GM12878 (cell line): ENCODE measurements at regions of chr16 and their contacts with region 1.

Region 1: DNA sequence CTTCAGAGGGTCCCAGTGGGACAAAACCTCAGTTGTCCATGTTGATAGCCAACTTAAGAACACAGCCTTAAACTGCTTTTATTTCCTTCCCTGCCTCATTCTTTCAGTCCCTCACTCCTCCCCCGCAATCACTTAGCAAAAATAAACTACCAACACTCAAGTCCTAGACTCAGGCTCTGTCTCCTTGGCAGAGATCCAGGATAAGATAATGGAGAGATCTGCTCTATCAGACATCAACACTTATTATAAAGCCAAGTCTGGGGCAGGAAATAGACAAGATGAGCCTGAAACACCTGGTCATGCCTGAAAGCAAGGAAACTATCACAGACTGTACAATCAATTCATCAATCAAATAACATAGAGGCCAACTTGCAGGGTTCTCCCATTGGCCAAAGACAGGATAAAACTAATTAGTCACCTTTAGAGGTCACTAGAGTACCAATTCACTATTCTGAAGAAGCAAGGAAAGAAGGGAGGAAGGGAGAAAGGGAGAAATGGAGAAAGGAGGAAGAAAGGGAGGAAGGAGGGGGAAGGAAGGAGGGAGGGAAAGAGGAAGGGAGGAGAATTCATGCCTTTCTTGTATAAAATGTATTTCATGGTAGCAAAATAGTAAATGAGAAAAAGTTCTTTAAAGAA is 15.7 kb downstream of the HYDIN start:
- DNase-seq: no peak
- ATAC-seq: peak; percentile 49; the same call in 2 of the 3 replicates
- H3K4me3 ChIP-seq: no peak overlapping the region
- H3K27ac ChIP-seq: no peak overlapping the region
- H3K4me1 ChIP-seq: no peaks in the 10 kb centered on the region
- H3K27me3 ChIP-seq: no peaks in the 10 kb centered on the region
- CTCF ChIP-seq: peak; percentile 23 to 35 (median 26); a peak in 4 of 6 replicates
- EP300 ChIP-seq: no peak
- POLR2A ChIP-seq: no peak
- RAD21 ChIP-seq: peak; percentile 61

Region 2: DNA sequence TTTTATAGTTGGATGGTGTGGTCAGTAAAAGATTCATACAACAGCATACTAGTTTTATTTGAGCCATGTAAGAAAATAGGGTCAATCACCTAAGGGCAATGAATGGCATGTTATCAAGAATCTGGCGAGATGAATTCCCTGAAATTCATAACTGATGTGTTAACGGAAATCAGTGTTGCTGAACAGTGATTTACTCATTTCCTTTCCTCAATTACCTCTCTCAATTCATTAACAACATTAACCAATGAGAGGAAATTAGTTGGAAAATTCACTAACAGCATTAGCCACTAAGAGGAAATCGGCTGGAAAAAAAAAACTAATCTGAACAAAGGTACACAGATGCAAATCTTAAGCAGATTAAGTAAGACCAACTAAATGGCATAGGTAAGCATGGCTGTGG is 68.1 kb after region 1 on chr16:
- CTCF ChIA-PET with region 1: no interaction called
- POLR2A ChIA-PET with region 1: no interaction called
- RAD21 ChIA-PET with region 1: no interaction called
- SMC1A ChIA-PET with region 1: no interaction called
- in situ Hi-C with region 1: no loop called
- intact Hi-C with region 1: no loop called
- DNase-seq: no peak
- ATAC-seq: no peak
- H3K4me3 ChIP-seq: no peak overlapping the region
- H3K27ac ChIP-seq: no peak overlapping the region
- H3K4me1 ChIP-seq: peaks cover 4% of the 10 kb centered on the region; the same call in 1 of the 2 replicates
- H3K27me3 ChIP-seq: no peaks in the 10 kb centered on the region
- CTCF ChIP-seq: no peak
- EP300 ChIP-seq: no peak
- POLR2A ChIP-seq: no peak
- RAD21 ChIP-seq: no peak

Region 3: GRCh38 chr16:71297341-71297634 is 82.4 kb after region 1 on chr16:
- CTCF ChIA-PET with region 1: no interaction called
- POLR2A ChIA-PET with region 1: no interaction called
- RAD21 ChIA-PET with region 1: no interaction called
- SMC1A ChIA-PET with region 1: no interaction called
- in situ Hi-C with region 1: no loop called
- intact Hi-C with region 1: no loop called
- DNase-seq: no peak
- ATAC-seq: no peak
- H3K4me3 ChIP-seq: no peak overlapping the region
- H3K27ac ChIP-seq: no peak overlapping the region
- H3K4me1 ChIP-seq: no peaks in the 10 kb centered on the region
- H3K27me3 ChIP-seq: no peaks in the 10 kb centered on the region; a peak in 1 of 4 replicates
- CTCF ChIP-seq: no peak
- EP300 ChIP-seq: no peak
- POLR2A ChIP-seq: no peak
- RAD21 ChIP-seq: no peak

Region 4: GRCh38 chr16:71358464-71358998 is 143.7 kb after region 1 on chr16 and contains the start of gene CALB2:
- CTCF ChIA-PET with region 1: no interaction called
- POLR2A ChIA-PET with region 1: no interaction called
- RAD21 ChIA-PET with region 1: no interaction called
- SMC1A ChIA-PET with region 1: no interaction called
- in situ Hi-C with region 1: no loop called
- intact Hi-C with region 1: loop called (anchors 2 kb)
- DNase-seq: no peak
- ATAC-seq: peak; percentile 99
- H3K4me3 ChIP-seq: no peak within 1 kb of the TSS
- H3K27ac ChIP-seq: no peak within 1 kb of the TSS
- H3K4me1 ChIP-seq: no peaks in the 10 kb centered on the region
- H3K27me3 ChIP-seq: peaks cover 0 to 1% of the 10 kb centered on the region in 2 experiments; a peak in 3 of 4 replicates
- CTCF ChIP-seq: peak; percentile 77 to 92 (median 89)
- EP300 ChIP-seq: no peak
- POLR2A ChIP-seq: no peak
- RAD21 ChIP-seq: peak; percentile 87
- polyA plus RNA-seq, gene CALB2: not detected